Vagina (tissue), 2 donors: ENCODE measurements at regions of chr3 and their contacts with region 1.

Region 1: DNA sequence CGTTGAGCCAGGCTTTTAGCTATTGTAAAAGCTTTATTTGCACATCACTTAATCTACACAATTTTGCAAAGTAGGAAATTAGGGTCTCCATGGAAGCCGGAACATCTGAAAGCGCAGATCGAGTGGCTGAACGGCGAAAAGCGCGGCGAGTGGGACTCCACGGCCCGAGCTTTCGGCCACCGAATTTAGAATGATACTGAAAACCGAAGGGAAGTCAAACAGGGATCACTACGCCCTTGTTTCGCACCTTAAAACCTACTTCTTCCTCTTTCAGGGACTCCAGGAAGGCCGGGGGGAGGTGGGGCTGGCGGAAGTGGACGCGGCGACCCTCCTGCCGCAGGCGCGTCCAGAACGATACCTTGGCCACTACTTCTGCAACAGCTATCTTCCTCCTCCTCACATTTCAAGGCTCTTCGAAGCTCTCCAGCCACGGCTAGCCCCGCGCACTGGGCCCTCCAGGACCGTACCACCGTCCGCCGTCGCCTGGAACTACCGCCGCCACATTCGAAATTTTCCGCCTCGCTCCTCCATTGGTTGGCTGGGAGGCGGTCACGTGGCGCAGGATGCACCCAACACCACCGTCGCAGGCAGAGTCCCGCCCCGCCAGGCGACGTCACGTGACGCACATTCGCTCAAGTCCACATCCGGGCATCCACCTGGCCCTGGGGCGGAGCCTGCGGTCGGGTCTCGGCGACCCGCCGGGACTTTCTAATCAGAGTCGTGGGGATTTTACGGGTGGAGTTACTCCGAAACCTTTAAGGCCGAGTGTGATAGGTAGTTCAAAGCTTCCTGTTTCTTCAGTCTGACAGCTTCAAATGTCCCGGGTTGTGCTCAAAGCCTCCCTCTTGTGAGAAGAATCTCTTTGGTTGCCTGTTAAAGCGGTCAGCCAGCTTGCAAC is at the start of gene SGO1:
- DNase-seq: peak; percentile 99
- H3K4me3 ChIP-seq: peak within 1 kb of the TSS; percentile 51 to 72
- H3K27ac ChIP-seq: peak within 1 kb of the TSS; percentile 93
- H3K4me1 ChIP-seq: peaks cover 16% of the 10 kb centered on the region
- H3K27me3 ChIP-seq: no peaks in the 10 kb centered on the region
- CTCF ChIP-seq: no peak
- POLR2A ChIP-seq: peak in 1 of 2 donors; percentile 69
- total RNA-seq, gene SGO1: 10.8 TPM

Region 2: GRCh38 chr3:19994796-19995195 is 191.2 kb before region 1 on chr3:
- intact Hi-C with region 1: no loop called
- DNase-seq: no peak
- H3K4me3 ChIP-seq: no peak overlapping the region
- H3K27ac ChIP-seq: no peak overlapping the region
- H3K4me1 ChIP-seq: no peaks in the 10 kb centered on the region
- H3K27me3 ChIP-seq: no peaks in the 10 kb centered on the region
- CTCF ChIP-seq: no peak
- POLR2A ChIP-seq: no peak

Region 3: DNA sequence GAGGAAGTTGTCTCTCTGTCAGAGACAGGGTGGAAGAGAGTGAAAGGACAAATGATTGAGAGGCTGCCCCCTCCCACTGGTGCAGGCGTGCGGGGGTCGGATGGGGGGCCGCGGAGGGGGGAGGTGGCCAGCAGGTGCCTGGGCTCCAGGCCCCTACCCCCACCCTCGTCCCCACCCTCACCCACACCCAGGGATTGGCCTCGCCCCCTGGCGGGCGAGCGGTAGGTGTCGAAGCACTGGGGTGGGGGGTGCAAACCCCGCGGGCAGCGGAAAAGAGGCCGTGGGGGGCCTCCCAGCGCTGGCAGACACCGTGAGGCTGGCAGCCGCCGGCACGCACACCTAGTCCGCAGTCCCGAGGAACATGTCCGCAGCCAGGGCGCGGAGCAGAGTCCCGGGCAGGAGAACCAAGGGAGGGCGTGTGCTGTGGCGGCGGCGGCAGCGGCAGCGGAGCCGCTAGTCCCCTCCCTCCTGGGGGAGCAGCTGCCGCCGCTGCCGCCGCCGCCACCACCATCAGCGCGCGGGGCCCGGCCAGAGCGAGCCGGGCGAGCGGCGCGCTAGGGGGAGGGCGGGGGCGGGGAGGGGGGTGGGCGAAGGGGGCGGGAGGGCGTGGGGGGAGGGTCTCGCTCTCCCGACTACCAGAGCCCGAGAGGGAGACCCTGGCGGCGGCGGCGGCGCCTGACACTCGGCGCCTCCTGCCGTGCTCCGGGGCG is 146.0 kb before region 1 on chr3 and contains the start of gene KAT2B:
- intact Hi-C with region 1: loop called (anchors 5 kb)
- DNase-seq: no peak
- H3K4me3 ChIP-seq: peak within 1 kb of the TSS; percentile 90
- H3K27ac ChIP-seq: peak within 1 kb of the TSS; percentile 95
- H3K4me1 ChIP-seq: peaks cover 40% of the 10 kb centered on the region
- H3K27me3 ChIP-seq: no peaks in the 10 kb centered on the region
- CTCF ChIP-seq: peak in 2 of 3 experiments; percentile 9 to 64
- POLR2A ChIP-seq: peak in 1 of 2 donors; percentile 47
- total RNA-seq, gene KAT2B: 41.0 TPM